ENCODE measurements at regions of chr11 and their contacts with region 1.

Region 1: DNA sequence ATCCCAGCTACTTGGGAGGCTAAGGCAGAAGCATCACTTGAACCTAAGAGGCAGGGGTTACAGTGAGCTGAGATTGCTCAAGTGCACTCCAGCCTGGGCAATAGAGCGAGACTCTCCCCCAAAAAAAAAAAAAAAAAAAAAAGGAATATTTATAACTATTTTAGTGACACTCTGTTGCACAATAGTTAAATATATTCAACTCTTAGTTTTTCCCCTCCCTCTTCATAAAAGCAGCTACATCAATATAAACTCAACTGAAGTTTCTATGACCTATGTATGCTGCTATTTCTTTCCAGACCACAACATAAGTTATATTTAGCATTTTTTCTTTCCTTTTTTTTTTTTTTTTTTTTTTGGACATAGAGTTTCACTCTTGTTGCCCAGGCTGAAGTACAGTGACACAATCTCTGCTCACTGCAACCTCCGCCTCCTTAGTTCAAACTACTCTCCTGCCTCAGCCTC is 19.2 kb downstream of the CELF1 start:
- DNase-seq: peak; percentile 49
- H3K4me3 ChIP-seq: no peak overlapping the region
- H3K27me3 ChIP-seq: no peaks in the 10 kb centered on the region
- CTCF ChIP-seq: no peak

Region 2: DNA sequence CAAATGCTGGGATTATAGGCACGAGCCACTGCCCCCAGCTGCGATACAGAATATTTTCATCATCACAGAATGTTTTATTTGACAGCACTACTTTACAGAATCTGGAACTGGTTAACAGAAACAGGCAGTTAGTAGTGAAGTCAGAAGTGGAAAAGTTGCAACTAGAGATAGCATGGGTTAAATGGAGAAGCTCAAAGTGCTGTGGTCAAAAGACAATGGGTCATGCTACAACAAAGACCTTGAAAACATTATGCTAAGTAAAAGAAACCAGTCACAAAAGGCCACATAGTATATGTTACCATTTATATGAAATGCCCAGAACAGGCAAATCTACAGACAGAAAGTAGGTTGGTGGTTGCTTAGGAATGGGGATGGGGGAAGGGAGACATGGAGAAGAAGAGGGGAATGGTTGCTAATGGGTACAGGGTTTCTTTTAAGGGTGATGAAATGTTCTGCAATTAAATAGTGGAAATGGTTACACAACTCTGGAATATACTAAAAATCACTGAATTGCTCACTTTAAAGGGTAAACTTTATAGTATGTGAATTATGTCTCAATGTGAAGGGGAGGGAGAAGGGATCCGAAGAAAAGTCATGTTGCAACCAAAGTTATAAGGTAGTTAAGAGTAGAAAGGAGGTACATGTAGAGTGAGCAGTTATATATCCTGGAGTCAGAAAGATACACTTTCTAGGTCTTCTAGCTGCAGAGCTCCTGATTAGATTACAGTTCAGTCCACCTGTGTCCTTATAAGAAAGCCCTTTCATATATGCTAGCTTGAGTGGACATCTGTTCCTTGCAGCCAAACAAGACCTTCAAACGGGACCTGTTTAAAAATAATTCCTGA is 38.5 kb before region 1 on chr11:
- CTCF ChIA-PET with region 1: no interaction called
- POLR2A ChIA-PET with region 1: interaction called, 18 read pairs
- DNase-seq: peak; percentile 68
- H3K4me3 ChIP-seq: no peak overlapping the region
- H3K27me3 ChIP-seq: no peaks in the 10 kb centered on the region
- CTCF ChIP-seq: no peak

Region 3: DNA sequence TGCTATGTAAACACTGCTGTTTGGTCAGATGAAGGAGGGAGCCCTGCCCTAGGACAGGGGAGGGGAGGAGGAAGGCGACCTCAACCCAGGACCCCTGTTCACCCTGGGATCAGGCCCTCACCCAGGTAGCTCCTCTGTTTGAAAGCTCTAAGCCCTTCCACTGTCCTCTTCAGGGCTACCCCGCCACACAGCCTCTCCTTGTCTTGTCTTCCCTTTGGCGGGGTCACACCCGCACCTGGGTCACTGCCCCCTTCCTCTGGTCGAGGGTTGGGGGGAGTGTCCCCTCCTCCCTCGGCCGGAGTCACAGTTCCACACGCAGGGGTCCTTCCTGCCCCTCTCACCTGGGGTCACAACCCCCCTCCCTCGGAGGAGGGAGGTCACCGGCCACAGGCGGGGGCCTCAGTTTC is 31.2 kb after region 1 on chr11:
- CTCF ChIA-PET with region 1: no interaction called
- POLR2A ChIA-PET with region 1: no interaction called
- DNase-seq: no peak
- H3K4me3 ChIP-seq: peak overlapping the region; percentile 68
- H3K27me3 ChIP-seq: no peaks in the 10 kb centered on the region
- CTCF ChIP-seq: no peak

Region 4: DNA sequence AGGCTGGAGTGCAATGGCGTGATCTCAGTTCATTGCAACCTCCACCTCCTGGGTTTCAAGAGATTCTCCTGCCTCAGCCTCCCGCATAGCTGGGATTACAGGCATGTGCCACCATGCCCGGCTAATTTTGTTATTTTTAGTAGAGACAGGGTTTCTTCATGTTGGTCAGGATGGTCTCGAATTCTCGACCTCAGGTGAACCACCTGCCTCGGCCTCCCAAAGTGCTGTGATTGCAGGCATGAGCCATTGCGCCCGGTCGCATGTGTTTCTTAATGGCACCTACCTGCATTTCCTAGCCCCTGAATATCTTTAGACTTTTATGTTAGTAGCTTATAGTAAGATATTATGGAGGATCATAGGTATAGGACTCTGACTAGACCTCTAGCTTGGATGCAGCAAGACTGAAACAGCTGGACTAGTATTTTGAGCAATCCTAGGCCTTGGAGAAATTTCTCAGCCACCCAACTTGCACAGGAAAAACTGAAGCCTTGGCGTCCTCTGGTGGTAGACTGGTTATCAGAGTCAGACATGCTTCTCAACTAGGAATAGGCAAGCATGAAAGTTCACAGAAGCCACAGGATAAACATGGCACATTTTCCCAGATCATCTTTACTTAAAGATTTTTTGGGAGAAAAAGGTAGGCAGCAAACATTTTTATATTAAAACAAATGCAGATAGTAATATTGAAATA is 83.2 kb after region 1 on chr11:
- CTCF ChIA-PET with region 1: no interaction called
- POLR2A ChIA-PET with region 1: no interaction called
- DNase-seq: no peak
- H3K4me3 ChIP-seq: no peak overlapping the region
- H3K27me3 ChIP-seq: no peaks in the 10 kb centered on the region
- CTCF ChIP-seq: peak; percentile 98

Measured in BJ (cell line).